ENCODE measurements at regions of chr14 and their contacts with region 1.

Region 1: DNA sequence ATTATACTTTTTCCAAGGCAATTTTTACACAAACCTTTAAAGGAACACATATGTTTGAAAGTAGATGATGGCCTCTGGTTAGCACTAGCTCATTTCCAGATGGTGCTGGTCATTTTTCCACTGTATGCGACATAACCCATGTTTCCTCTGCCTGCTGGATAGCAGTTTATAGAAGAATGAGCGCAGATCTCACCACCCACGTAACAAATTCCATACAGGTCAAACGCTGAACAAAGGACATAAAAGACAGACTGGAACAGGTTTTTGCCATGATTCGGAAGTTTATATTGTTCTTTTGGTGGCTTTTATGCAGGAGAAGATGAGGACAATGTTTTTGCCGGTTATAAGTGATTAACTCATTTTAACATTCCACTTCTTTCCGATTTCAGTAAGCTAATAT is 30.7 kb downstream of the PPP1R36 start:
- DNase-seq: peak in 1 of 2 donors; percentile 2
- H3K4me3 ChIP-seq: no peak overlapping the region
- H3K27ac ChIP-seq: no peak overlapping the region
- H3K4me1 ChIP-seq: no peaks in the 10 kb centered on the region
- H3K27me3 ChIP-seq: no peaks in the 10 kb centered on the region
- CTCF ChIP-seq: no peak
- POLR2A ChIP-seq: no peak

Region 2: DNA sequence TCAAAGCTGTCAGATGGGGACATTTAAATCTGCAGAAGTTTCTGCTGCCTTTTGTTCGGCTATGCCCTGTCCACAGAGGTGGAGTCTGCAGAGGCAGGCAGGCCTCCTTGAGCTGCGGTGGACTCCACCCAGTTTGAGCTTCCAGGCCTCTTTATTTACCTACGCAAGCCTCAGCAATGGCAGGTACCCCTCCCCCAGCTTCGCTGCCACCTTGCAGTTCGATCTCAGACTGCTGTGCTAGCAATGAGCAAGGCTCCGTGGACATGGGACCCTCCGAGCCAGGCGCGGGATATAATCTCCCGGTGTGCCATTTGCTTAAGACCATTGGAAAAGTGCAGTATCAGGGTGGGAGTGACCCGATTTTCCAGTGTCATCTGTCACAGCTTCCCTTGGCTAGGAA is 947.6 kb after region 1 on chr14:
- intact Hi-C with region 1: loop called (anchors 10 kb)
- DNase-seq: no peak
- H3K4me3 ChIP-seq: no peak overlapping the region
- H3K27ac ChIP-seq: no peak overlapping the region
- H3K4me1 ChIP-seq: no peaks in the 10 kb centered on the region
- H3K27me3 ChIP-seq: no peaks in the 10 kb centered on the region
- CTCF ChIP-seq: no peak
- POLR2A ChIP-seq: no peak